ENCODE measurements at regions of chr16 and their contacts with region 1.

Region 1: GRCh38 chr16:87725596-87726235 is 40.1 kb downstream of the KLHDC4 start:
- DNase-seq: no peak
- ATAC-seq: no peak
- H3K4me3 Mint-ChIP-seq: no peak overlapping the region
- H3K27ac Mint-ChIP-seq: peak overlapping the region; percentile 74
- H3K4me1 Mint-ChIP-seq: peaks cover 31% of the 10 kb centered on the region
- H3K27me3 Mint-ChIP-seq: no peaks in the 10 kb centered on the region
- CTCF ChIP-seq: no peak

Region 2: DNA sequence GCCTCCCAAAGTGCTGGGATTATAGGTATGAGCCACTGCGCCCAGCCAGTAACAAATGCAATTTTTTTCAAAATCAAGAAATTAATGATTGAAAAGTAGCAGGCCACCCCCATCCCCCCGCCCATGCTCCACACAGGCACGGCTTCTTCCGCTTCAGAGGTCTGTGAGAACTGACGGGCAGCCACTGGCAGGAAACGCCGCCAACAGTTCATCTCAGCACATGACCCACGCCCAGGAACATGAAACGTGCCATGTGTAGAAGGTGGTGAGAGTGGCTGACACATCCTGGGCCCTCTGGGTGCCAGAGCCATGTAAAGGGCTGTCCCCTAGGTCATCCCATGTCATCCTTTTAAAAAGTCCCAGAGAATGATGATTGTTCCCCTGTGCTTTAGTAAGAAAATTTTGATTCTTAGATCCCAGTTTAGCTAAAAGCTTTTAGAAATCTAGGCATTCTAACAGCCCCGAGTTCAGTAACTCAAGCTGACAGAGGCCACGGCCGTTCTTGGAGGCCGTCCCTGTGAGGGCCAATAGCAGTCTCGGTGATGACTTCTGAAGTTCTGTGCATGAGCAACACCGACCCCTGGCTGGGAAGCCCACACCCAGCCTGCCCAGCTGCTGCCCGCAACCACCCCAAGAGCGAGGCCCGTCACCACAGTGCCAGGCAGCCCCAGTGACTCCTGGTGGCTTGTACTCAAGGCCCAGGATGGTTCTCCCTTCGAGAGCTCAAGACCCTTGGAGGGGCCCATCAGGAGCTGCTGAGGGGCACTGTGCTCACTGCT is 12.1 kb before region 1 on chr16:
- CTCF ChIA-PET with region 1: no interaction called
- POLR2A ChIA-PET with region 1: no interaction called
- intact Hi-C with region 1: loop called (anchors 1 kb)
- DNase-seq: no peak
- ATAC-seq: peak; percentile 67
- H3K4me3 Mint-ChIP-seq: no peak overlapping the region
- H3K27ac Mint-ChIP-seq: no peak overlapping the region
- H3K4me1 Mint-ChIP-seq: peaks cover 10% of the 10 kb centered on the region
- H3K27me3 Mint-ChIP-seq: no peaks in the 10 kb centered on the region
- CTCF ChIP-seq: no peak

Measured in activated B cell treated with CpG ODN at 0.5 μM for 24 hours (primary cell).